SK-N-SH (cell line): ENCODE measurements at regions of chr1 and their contacts with region 1.

Region 1: GRCh38 chr1:41023279-41023990 is 1.9 kb upstream of the SLFNL1 start:
- DNase-seq: peak; percentile 73
- H3K4me3 ChIP-seq: no peak overlapping the region
- H3K27ac ChIP-seq: no peak overlapping the region
- H3K4me1 ChIP-seq: no peaks in the 10 kb centered on the region; a peak in 1 of 4 replicates
- H3K27me3 ChIP-seq: no peaks in the 10 kb centered on the region
- CTCF ChIP-seq: peak; percentile 56
- EP300 ChIP-seq: no peak
- RAD21 ChIP-seq: peak; percentile 57

Region 2: DNA sequence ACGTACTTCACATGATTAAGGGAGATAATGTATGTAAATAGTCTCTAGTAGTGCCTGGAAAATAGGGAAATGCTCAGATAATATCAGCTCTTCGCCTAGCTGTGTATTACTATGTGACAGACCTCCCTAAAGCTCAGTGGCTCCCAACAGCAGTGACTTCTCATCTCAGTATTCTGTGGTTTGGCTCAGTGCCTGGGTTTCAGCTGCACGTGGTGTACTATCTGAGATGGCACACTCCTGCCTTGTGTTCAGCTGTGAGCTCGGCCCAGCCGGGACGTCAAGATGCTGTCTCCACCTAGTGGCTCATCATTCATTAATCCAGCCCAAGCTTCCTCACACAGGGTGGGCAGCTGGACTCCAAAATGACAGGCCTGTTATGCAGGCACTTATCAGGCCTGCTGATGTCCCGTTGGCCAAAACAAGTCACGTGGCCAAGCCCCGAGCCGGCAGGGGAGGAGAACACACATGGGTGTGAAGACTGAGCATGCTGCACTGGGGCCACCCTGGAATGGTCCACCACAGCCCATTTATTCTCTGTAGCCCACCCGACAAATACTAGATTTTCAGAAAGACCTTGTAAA is 19.7 kb before region 1 on chr1:
- CTCF ChIA-PET with region 1: interaction called, 11 read pairs
- POLR2A ChIA-PET with region 1: no interaction called
- DNase-seq: peak; percentile 86
- H3K4me3 ChIP-seq: no peak overlapping the region
- H3K27ac ChIP-seq: peak overlapping the region; percentile 75 to 82
- H3K4me1 ChIP-seq: peaks cover 12 to 18% of the 10 kb centered on the region in 2 experiments
- H3K27me3 ChIP-seq: no peaks in the 10 kb centered on the region
- CTCF ChIP-seq: peak; percentile 72
- EP300 ChIP-seq: peak; percentile 51 to 86; a peak in 3 of 4 replicates
- RAD21 ChIP-seq: peak; percentile 71

Region 3: DNA sequence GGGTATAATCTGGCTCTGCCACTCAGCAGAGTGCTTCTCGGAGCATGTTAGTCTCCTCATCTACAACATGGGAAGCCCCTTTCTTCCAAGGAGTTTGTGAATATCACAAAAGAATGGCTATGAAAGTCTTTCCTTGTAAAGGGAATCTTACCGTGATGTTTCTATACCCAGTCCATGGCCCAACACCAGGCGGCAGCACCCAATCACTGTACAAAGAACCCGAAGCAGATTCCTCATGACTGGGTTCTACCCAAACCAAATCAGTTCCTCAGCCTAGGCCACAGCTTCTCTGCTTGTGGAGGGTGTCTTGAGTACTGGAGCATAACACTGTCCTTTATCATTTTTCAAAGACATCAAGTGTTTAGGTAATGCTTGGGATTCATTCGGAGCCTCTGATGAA is 14.7 kb after region 1 on chr1:
- CTCF ChIA-PET with region 1: interaction called, 12 read pairs
- POLR2A ChIA-PET with region 1: no interaction called
- DNase-seq: no peak
- H3K4me3 ChIP-seq: no peak overlapping the region
- H3K27ac ChIP-seq: no peak overlapping the region
- H3K4me1 ChIP-seq: no peaks in the 10 kb centered on the region
- H3K27me3 ChIP-seq: no peaks in the 10 kb centered on the region
- CTCF ChIP-seq: no peak
- EP300 ChIP-seq: no peak
- RAD21 ChIP-seq: no peak